Posterior vena cava (tissue), 2 donors: ENCODE measurements at regions of chr1 and their contacts with region 1.

Region 1: GRCh38 chr1:36070349-36070748 is 13.5 kb upstream of the TEKT2 start:
- DNase-seq: no peak

Region 2: GRCh38 chr1:35637401-35637809 is 432.9 kb before region 1 on chr1:
- intact Hi-C with region 1: loop called in 1 of 2 experiments (anchors 10 kb)
- DNase-seq: no peak

Region 3: DNA sequence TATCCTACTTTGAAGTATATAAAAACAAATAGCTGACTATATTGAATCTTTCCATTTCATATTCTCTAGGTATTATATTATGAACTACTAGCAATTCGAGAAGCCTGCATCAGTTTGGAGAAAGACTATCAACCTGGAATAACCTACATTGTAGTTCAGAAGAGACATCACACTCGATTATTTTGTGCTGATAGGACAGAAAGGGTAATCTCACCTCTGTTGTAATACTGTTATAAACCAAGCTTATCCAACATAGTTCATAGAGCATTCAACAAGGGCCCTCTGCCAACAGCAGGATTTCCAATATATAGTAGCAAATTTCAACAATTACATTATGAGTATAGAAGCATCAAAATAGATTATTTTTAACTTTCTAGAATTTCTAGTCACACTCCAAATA is 30.1 kb before region 1 on chr1:
- intact Hi-C with region 1: no loop called
- DNase-seq: no peak

Region 4: GRCh38 chr1:36055706-36056105 is 14.6 kb before region 1 on chr1:
- intact Hi-C with region 1: loop called in 1 of 2 experiments (anchors 1 kb)
- DNase-seq: no peak

Region 5: GRCh38 chr1:36149237-36149972 is 79.1 kb after region 1 on chr1 and contains the start of gene TRAPPC3:
- intact Hi-C with region 1: no loop called
- DNase-seq: peak; percentile 100
- total RNA-seq, gene TRAPPC3: 51.4 to 54.7 TPM